K562 (cell line): ENCODE measurements at regions of chr1 and their contacts with region 1.

Region 1: DNA sequence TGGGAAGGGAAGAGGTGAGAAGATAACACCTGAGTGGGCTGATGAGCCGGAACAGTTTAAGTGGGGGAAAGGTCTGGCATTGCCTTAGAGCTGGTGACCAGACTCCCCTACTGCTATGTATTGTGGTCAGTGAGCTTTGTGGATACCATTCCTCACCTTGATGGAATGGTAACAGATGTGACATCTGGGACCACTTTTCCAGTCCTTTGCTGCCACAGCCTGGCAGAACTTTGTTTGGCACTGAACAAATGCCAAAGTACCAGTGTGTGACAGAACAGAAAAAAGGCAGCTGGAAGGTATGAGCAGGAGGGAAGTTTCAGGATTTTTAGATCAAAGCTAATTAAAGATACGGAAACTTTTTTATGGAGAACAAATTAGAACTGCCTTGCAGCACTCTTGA is 6.2 kb downstream of the MED8 start:
- DNase-seq: no peak
- ATAC-seq: no peak
- H3K4me3 ChIP-seq: no peak overlapping the region
- H3K27ac ChIP-seq: no peak overlapping the region
- H3K4me1 ChIP-seq: peaks cover 0 to 4% of the 10 kb centered on the region in 2 experiments; a peak in 2 of 5 replicates
- H3K27me3 ChIP-seq: no peaks in the 10 kb centered on the region
- CTCF ChIP-seq: peak in 1 of 3 experiments; percentile 25; a peak in 2 of 6 replicates
- EP300 ChIP-seq: no peak
- POLR2A ChIP-seq: no peak
- RAD21 ChIP-seq: peak in 1 of 2 experiments; percentile 18; a peak in 2 of 4 replicates

Region 2: DNA sequence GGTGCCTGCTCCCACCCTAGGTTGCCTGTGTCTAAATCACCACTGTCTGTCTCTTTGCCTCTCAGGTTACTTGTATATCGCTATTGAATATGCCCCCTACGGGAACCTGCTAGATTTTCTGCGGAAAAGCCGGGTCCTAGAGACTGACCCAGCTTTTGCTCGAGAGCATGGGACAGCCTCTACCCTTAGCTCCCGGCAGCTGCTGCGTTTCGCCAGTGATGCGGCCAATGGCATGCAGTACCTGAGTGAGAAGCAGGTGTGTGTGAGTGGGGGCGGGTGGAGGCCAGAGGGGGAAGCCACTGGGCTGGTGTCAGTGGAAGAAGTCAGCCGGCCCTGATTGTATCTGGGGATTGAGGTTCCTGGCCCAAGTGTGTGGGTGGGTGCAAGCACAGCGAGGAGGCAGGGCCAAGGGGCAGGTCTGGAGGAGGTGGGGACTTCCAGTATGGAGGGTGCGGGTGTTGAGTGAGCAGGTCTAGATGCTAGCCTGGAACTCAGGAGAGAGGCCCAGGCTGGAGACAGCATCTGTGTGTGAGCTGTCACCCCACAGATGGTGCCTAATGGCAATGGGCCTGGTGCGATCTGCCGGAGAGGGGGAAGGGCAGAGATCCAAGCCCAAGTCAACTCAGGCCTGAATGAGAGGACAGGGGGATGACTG is 65.5 kb before region 1 on chr1:
- CTCF ChIA-PET with region 1: no interaction called
- POLR2A ChIA-PET with region 1: no interaction called
- in situ Hi-C with region 1: no loop called
- intact Hi-C with region 1: no loop called
- DNase-seq: peak; percentile 44 to 59 (median 56)
- ATAC-seq: peak; percentile 42
- H3K4me3 ChIP-seq: no peak overlapping the region
- H3K27ac ChIP-seq: no peak overlapping the region
- H3K4me1 ChIP-seq: peaks cover 3 to 14% of the 10 kb centered on the region in 2 experiments; a peak in 3 of 5 replicates
- H3K27me3 ChIP-seq: peaks cover 6 to 21% of the 10 kb centered on the region in 2 experiments; a peak in 3 of 5 replicates
- CTCF ChIP-seq: no peak
- EP300 ChIP-seq: no peak
- POLR2A ChIP-seq: no peak
- RAD21 ChIP-seq: no peak

Region 3: GRCh38 chr1:43373066-43373940 is 10.1 kb before region 1 on chr1:
- CTCF ChIA-PET with region 1: no interaction called
- POLR2A ChIA-PET with region 1: interaction called, 72 read pairs
- in situ Hi-C with region 1: no loop called
- intact Hi-C with region 1: no loop called
- DNase-seq: no peak
- ATAC-seq: no peak
- H3K4me3 ChIP-seq: no peak overlapping the region
- H3K27ac ChIP-seq: no peak overlapping the region; the same call in 2 of the 3 replicates
- H3K4me1 ChIP-seq: peaks cover 7 to 22% of the 10 kb centered on the region in 2 experiments
- H3K27me3 ChIP-seq: no peaks in the 10 kb centered on the region
- CTCF ChIP-seq: no peak
- EP300 ChIP-seq: no peak
- POLR2A ChIP-seq: no peak
- RAD21 ChIP-seq: no peak

Region 4: DNA sequence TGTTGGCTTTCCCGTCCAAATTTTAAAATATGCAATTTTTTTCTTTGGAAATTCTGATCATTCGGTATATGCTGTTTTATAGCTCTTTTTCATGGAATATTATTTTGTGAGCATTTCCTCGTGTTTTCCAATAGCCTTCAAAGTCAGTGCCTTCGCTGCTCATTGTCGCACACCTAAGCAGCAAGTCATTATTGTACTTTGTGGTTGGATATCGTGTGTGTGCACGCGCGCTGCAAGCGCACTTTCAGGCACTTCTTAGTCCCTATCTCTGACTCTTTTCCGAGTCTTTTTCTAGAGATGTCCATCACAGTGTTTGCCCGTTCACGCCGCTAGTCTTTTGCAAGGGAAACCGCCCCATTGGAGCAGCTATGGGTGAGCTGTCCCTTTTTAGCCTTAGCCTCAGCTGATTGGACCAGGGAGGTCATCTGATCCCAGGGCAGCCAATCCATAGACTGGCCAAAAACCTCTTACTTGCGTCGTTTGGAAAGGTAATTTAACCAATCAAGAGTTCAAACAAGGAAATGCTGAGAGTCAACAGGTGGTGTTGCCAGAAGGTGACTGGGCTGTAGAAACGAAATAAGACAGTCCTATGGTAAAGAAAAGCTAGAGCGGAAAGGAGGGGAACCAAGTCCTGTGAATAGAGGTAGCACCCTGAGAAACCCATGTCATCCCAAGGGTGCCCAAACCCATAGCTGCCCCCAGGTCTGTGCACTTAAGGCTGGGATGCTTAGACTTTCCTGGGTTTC is 71.0 kb after region 1 on chr1:
- CTCF ChIA-PET with region 1: no interaction called
- POLR2A ChIA-PET with region 1: no interaction called
- in situ Hi-C with region 1: no loop called
- intact Hi-C with region 1: no loop called
- DNase-seq: peak; percentile 38 to 77 (median 68)
- ATAC-seq: peak; percentile 65
- H3K4me3 ChIP-seq: no peak overlapping the region
- H3K27ac ChIP-seq: no peak overlapping the region
- H3K4me1 ChIP-seq: peaks cover 0 to 16% of the 10 kb centered on the region in 2 experiments; a peak in 3 of 5 replicates
- H3K27me3 ChIP-seq: no peaks in the 10 kb centered on the region; a peak in 1 of 5 replicates
- CTCF ChIP-seq: no peak
- EP300 ChIP-seq: no peak
- POLR2A ChIP-seq: no peak
- RAD21 ChIP-seq: no peak

Region 5: DNA sequence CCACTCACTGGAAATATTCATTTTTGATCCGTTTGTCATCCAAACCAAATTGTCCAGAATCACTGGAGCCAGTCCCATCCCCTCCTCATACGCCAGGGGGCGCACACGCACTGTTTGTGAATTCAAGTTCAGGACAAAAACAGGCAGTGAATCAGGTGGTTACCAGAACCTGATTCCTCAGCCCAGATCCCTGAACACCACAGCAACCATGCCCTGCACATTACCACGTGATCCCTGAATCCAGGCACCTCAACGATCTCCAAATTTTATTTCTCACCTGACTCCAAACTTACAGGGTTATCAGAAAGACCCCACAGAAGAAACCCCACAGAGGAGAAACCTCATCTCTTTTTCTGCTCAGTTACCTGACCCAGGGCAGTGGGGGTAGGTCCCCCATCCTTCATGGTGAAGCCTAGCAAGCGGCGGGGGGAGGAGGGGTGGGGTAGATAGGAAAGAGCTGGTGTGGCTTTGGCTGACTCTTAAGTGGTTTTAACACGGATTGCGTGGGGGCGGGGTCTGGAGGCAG is 145.8 kb after region 1 on chr1:
- CTCF ChIA-PET with region 1: no interaction called
- POLR2A ChIA-PET with region 1: no interaction called
- in situ Hi-C with region 1: no loop called
- intact Hi-C with region 1: no loop called
- DNase-seq: peak; percentile 76 to 92 (median 83)
- ATAC-seq: peak; percentile 84
- H3K4me3 ChIP-seq: no peak overlapping the region
- H3K27ac ChIP-seq: no peak overlapping the region
- H3K4me1 ChIP-seq: peaks cover 12 to 28% of the 10 kb centered on the region in 2 experiments; a peak in 4 of 5 replicates
- H3K27me3 ChIP-seq: peaks cover 26 to 37% of the 10 kb centered on the region in 2 experiments; a peak in 4 of 5 replicates
- CTCF ChIP-seq: peak; percentile 89 to 98 (median 98)
- EP300 ChIP-seq: no peak
- POLR2A ChIP-seq: no peak
- RAD21 ChIP-seq: peak; percentile 91 to 98